Aorta (tissue), 5 donors: ENCODE measurements at regions of chr2 and their contacts with region 1.

Region 1: GRCh38 chr2:37890893-37891495 is 34.1 kb upstream of the RMDN2 start:
- DNase-seq: peak; percentile 81 to 86
- ATAC-seq: peak; percentile 87
- H3K4me3 ChIP-seq: no peak overlapping the region
- H3K27ac ChIP-seq: no peak overlapping the region
- H3K4me1 ChIP-seq: no peaks in the 10 kb centered on the region
- H3K27me3 ChIP-seq: no peaks in the 10 kb centered on the region

Region 2: GRCh38 chr2:37168217-37168981 is 722.6 kb before region 1 on chr2:
- intact Hi-C with region 1: loop called (anchors 5 to 10 kb)
- DNase-seq: no peak
- ATAC-seq: no peak
- H3K4me3 ChIP-seq: no peak overlapping the region
- H3K27ac ChIP-seq: no peak overlapping the region
- H3K4me1 ChIP-seq: no peaks in the 10 kb centered on the region
- H3K27me3 ChIP-seq: no peaks in the 10 kb centered on the region

Region 3: DNA sequence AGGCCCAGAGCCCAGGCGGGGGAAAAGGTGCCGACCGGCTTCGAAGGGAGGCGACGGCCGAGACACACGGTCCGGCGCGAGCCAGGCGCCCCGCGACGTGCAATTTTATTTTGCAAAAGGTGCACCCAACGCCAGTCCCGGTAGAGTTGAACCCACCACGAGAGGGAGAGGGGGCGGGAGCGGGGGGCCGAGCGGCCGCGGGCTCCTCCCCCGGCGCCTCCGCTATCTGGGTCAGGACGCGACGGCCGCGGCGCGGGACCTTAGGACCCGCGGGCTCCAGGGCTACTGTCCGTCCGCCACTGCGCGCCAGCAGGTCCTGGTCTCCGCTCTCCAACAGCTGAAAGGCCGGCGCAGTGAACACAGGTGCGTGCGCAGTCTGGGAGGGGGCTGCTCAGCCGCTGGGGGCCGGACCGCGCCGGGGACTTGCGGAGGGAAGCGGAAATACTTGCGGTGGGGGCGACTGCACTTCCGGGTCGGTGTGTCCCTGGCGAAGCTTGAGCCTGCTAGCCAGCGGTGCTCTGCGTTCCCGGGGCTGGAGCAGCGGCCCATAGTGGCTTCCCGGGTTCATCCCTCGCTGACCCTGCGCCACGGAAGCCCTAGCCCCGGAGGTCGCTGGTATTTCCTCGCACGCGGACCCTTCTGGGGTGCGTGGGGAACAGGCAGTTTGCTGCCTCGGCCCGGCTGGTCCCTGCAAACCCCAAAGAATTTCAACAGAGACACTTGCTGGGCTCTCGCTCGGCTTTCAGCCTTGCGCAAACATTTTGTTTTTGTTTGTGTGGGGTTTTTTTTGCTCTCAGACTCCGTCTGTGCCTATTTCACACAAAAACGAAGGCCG is 34.3 kb after region 1 on chr2 and contains the start of gene RMDN2:
- intact Hi-C with region 1: no loop called
- DNase-seq: peak; percentile 95 to 96
- ATAC-seq: peak; percentile 97
- H3K4me3 ChIP-seq: peak within 1 kb of the TSS; percentile 84 to 92
- H3K27ac ChIP-seq: peak within 1 kb of the TSS in 1 of 2 donors; percentile 46
- H3K4me1 ChIP-seq: no peaks in the 10 kb centered on the region
- H3K27me3 ChIP-seq: no peaks in the 10 kb centered on the region
- total RNA-seq, gene RMDN2: 5.3 to 8.0 TPM